ENCODE measurements at regions of chr17 and their contacts with region 1.

Region 1: DNA sequence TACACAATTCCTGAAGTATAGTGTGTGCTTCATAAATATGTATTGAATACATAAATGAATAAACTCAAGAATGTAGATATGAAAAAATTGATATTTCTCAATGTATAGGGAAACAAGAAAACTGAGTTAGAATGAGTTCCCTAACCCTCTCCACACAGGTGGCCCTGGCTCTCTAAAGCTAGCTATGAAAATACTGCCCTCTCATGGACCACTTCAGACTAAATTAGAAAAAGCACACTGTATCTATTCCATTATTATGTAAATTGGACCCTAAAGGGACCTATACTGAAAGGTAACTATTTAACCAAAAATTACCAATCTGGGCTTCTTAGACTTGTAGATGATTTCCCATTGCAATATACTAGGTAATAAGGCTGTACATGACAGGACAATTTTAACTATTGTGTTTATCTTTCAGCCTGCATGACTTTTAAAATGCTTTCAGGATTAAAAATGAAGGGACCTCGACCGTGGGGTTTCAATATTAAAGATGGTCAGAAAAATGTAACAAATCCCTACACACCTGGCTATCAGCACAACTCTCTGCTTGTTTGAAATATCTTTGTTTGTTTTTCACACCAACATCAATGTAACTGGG is 672.5 kb upstream of the KIF2B start:
- DNase-seq: no peak
- H3K4me3 ChIP-seq: no peak overlapping the region
- H3K27ac ChIP-seq: no peak overlapping the region
- H3K4me1 ChIP-seq: no peaks in the 10 kb centered on the region
- H3K27me3 ChIP-seq: no peaks in the 10 kb centered on the region
- CTCF ChIP-seq: no peak
- POLR2A ChIP-seq: no peak

Region 2: DNA sequence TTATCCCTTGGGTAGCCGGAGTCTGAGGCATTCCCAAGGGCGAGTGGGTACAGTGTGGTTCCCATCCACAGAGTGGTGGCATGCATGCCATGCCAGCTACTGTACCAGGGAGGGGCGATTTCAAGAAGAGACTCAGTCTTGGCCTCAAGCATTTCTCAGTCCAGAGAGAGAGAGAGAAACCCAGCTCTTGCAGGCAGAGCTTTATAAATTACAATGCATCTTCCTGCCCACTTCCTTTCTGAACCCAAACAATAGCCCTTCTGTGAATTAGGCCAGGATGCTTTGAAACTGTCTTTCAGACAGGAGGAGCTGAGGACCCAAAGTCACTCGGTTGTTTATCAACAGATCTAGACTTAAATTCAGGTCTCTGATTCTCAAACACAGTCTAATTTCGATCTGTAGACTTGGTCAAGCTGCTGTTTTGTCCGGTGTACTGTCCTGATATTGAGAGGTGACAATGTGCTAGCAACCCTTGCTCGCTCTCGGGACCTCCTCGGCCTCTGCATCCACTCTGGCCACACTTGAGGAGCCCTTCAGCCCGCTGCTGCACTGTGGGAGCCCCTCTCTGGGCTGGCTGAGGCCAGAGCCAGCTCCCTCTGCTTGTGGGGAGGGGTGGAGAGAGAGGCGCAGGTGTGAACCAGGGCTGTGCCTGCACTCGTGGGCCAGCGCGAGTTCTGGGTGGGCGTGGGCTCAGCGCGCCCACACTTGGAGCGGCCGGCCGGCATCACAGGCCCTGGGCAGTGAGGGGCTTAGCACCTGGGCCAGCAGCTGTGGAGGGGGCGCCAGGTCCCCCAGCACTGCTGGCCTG is 1481.8 kb before region 1 on chr17:
- intact Hi-C with region 1: loop called (anchors 10 kb)
- DNase-seq: no peak
- H3K4me3 ChIP-seq: no peak overlapping the region
- H3K27ac ChIP-seq: peak overlapping the region in 1 of 2 donors; percentile 63
- H3K4me1 ChIP-seq: no peaks in the 10 kb centered on the region
- H3K27me3 ChIP-seq: no peaks in the 10 kb centered on the region
- CTCF ChIP-seq: no peak
- POLR2A ChIP-seq: no peak

Region 3: GRCh38 chr17:53118948-53119347 is 31.3 kb before region 1 on chr17:
- intact Hi-C with region 1: no loop called
- DNase-seq: no peak
- H3K4me3 ChIP-seq: no peak overlapping the region
- H3K27ac ChIP-seq: no peak overlapping the region
- H3K4me1 ChIP-seq: no peaks in the 10 kb centered on the region
- H3K27me3 ChIP-seq: no peaks in the 10 kb centered on the region
- CTCF ChIP-seq: no peak
- POLR2A ChIP-seq: no peak

Measured in breast epithelium (tissue), 4 donors.